ENCODE measurements at regions of chr3 and their contacts with region 1.

Region 1: DNA sequence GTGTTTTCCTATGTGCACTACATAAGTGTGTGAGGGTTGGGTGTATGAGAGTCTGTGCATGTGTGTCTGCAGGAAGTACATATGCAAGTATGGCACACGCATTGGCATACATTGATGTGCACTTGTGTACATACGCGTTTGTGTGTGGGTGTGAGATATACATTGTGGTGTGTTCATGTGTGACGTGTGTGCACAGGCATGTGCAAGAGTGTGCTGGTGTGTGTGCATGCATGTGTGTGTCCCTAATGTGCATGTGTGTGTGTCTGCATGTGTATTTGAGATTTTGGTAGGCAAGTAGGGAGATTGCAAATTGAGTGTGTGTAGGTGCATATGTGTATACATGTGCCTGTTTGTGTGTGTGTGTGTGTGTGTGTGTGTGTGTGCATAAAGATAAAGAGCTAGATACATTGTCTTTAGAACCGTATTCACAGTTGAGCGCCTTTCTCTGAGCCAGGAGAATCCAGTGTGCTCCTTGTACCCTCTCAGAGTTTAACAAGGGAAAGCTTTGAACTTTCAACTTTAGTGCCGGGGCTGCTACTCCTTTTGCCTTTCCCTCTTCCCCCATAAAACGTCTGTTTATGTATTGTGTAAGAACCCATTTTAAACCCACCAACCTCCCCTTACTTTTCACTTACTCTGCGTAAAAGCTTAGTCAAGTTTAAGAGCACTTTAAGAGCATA is 152.4 kb upstream of the CHL1 start:
- DNase-seq: no peak
- H3K4me3 ChIP-seq: no peak overlapping the region
- H3K27ac ChIP-seq: no peak overlapping the region
- H3K4me1 ChIP-seq: no peaks in the 10 kb centered on the region
- CTCF ChIP-seq: no peak

Region 2: GRCh38 chr3:54244-54643 is 10.1 kb after region 1 on chr3:
- CTCF ChIA-PET with region 1: no interaction called
- POLR2A ChIA-PET with region 1: no interaction called
- intact Hi-C with region 1: no loop called
- DNase-seq: no peak
- H3K4me3 ChIP-seq: no peak overlapping the region
- H3K27ac ChIP-seq: no peak overlapping the region
- H3K4me1 ChIP-seq: no peaks in the 10 kb centered on the region
- CTCF ChIP-seq: no peak

Region 3: GRCh38 chr3:184983-185382 is 140.8 kb after region 1 on chr3:
- CTCF ChIA-PET with region 1: no interaction called
- POLR2A ChIA-PET with region 1: no interaction called
- intact Hi-C with region 1: no loop called
- DNase-seq: no peak
- H3K4me3 ChIP-seq: no peak overlapping the region
- H3K27ac ChIP-seq: no peak overlapping the region
- H3K4me1 ChIP-seq: no peaks in the 10 kb centered on the region
- CTCF ChIP-seq: no peak

Region 4: GRCh38 chr3:377158-377561 is 333.0 kb after region 1 on chr3:
- CTCF ChIA-PET with region 1: interaction called, 4 read pairs
- POLR2A ChIA-PET with region 1: no interaction called
- intact Hi-C with region 1: loop called (anchors 1 kb)
- DNase-seq: peak; percentile 61
- H3K4me3 ChIP-seq: no peak overlapping the region
- H3K27ac ChIP-seq: no peak overlapping the region
- H3K4me1 ChIP-seq: no peaks in the 10 kb centered on the region
- CTCF ChIP-seq: peak; percentile 82